Common myeloid progenitor, CD34-positive (primary cell): ENCODE measurements at regions of chr5 and their contacts with region 1.

Region 1: GRCh38 chr5:91383027-91383955 is at the start of gene ARRDC3:
- DNase-seq: peak; percentile 94 to 97 (median 96)
- H3K4me3 ChIP-seq: peak within 1 kb of the TSS; percentile 32 to 99 (median 88)
- H3K27ac ChIP-seq: peak within 1 kb of the TSS; percentile 96 to 99
- H3K4me1 ChIP-seq: peaks cover 10 to 24% (median 19%) of the 10 kb centered on the region in 4 experiments
- H3K27me3 ChIP-seq: no peaks in the 10 kb centered on the region

Region 2: GRCh38 chr5:90932052-90932699 is 451.1 kb before region 1 on chr5:
- CTCF ChIA-PET with region 1: interaction called, 40 read pairs
- POLR2A ChIA-PET with region 1: no interaction called
- DNase-seq: peak; percentile 42 to 53 (median 49)
- H3K4me3 ChIP-seq: no peak overlapping the region
- H3K27ac ChIP-seq: no peak overlapping the region
- H3K4me1 ChIP-seq: peaks cover 0 to 4% (median 0%) of the 10 kb centered on the region in 4 experiments
- H3K27me3 ChIP-seq: no peaks in the 10 kb centered on the region

Region 3: DNA sequence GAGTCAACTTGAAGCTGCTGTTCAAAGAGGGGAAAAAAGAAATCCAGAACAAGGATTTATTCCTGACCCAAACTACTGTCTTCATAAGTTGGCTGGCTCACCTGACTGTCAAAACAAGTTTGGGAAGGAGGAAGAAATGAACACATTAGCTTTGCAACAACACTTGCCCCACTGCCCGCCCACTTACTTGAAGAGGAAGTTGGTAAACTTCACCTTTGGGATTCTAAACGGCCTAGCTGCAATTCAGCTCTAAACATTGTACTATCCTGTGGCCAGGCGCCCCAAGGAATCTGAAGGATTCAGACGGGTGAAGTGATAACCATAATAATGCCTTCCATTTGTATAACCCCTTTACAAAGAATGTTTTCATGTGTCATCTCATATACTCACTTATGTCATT is 199.6 kb before region 1 on chr5:
- CTCF ChIA-PET with region 1: interaction called, 15 read pairs
- POLR2A ChIA-PET with region 1: no interaction called
- DNase-seq: peak in 1 of 3 donors; percentile 9
- H3K4me3 ChIP-seq: no peak overlapping the region
- H3K27ac ChIP-seq: no peak overlapping the region
- H3K4me1 ChIP-seq: peaks cover 0 to 18% (median 3%) of the 10 kb centered on the region in 4 experiments
- H3K27me3 ChIP-seq: no peaks in the 10 kb centered on the region

Region 4: GRCh38 chr5:91219803-91220371 is 163.4 kb before region 1 on chr5:
- CTCF ChIA-PET with region 1: interaction called, 65 read pairs
- POLR2A ChIA-PET with region 1: interaction called, 4 read pairs
- DNase-seq: peak; percentile 45 to 65 (median 60)
- H3K4me3 ChIP-seq: no peak overlapping the region
- H3K27ac ChIP-seq: no peak overlapping the region
- H3K4me1 ChIP-seq: no peaks in the 10 kb centered on the region
- H3K27me3 ChIP-seq: no peaks in the 10 kb centered on the region

Region 5: DNA sequence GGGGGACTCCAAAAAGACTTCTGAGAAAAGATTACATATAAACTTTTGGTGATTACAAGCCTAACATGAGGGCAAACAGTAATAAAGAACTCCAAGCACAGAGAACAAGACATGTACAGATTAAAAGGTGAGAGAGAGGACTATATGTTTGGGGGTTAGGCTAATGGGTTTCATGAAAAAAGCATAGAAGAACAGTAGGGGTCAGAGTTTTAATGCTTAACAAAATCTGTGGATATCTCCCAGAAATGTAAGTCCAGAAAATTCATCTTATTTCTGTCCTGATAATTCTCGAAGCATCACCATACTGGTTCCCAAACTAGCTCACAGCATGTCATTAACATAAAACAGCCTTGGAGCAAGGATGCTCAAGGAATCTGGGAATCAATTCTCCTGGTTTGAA is 137.4 kb before region 1 on chr5:
- CTCF ChIA-PET with region 1: interaction called, 18 read pairs
- POLR2A ChIA-PET with region 1: no interaction called
- DNase-seq: peak in 1 of 3 donors; percentile 4
- H3K4me3 ChIP-seq: no peak overlapping the region
- H3K27ac ChIP-seq: no peak overlapping the region
- H3K4me1 ChIP-seq: no peaks in the 10 kb centered on the region
- H3K27me3 ChIP-seq: no peaks in the 10 kb centered on the region

Region 6: DNA sequence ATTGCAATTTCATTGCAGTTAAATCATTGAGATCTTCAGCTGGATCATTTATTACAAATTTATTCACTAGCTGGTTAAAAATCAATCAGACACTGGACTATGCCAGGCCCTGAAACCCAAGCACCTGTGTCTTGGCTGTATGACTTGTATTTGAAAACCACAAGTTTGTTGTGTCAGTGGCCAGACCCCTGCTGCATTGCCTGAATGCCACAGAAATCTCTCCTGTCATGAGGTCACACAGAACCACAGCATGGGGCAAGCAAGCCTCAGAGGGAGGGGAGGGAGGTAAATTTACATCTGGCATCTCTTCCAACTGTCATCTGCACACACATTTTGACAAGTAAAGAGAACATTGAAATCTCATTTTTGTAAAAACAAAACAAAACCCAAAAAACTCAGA is 90.2 kb before region 1 on chr5:
- CTCF ChIA-PET with region 1: no interaction called
- POLR2A ChIA-PET with region 1: no interaction called
- DNase-seq: peak in 2 of 3 donors; percentile 80 to 86
- H3K4me3 ChIP-seq: no peak overlapping the region
- H3K27ac ChIP-seq: no peak overlapping the region
- H3K4me1 ChIP-seq: peaks cover 0 to 11% (median 2%) of the 10 kb centered on the region in 4 experiments
- H3K27me3 ChIP-seq: peaks cover 0 to 2% (median 0%) of the 10 kb centered on the region in 5 experiments

Region 7: GRCh38 chr5:91419571-91420537 is 36.6 kb after region 1 on chr5:
- CTCF ChIA-PET with region 1: interaction called, 14 read pairs
- POLR2A ChIA-PET with region 1: interaction called, 3 read pairs
- DNase-seq: peak; percentile 71 to 89 (median 83)
- H3K4me3 ChIP-seq: no peak overlapping the region
- H3K27ac ChIP-seq: no peak overlapping the region
- H3K4me1 ChIP-seq: peaks cover 0 to 10% (median under 1%) of the 10 kb centered on the region in 4 experiments
- H3K27me3 ChIP-seq: no peaks in the 10 kb centered on the region